ENCODE measurements at regions of chr12 and their contacts with region 1.

Region 1: GRCh38 chr12:75560167-75560566 is 48.8 kb upstream of the KRR1 start:
- DNase-seq: peak; percentile 63
- ATAC-seq: peak; percentile 87
- H3K4me3 ChIP-seq: no peak overlapping the region
- H3K27ac ChIP-seq: no peak overlapping the region
- H3K4me1 ChIP-seq: peaks cover 6% of the 10 kb centered on the region
- H3K27me3 ChIP-seq: no peaks in the 10 kb centered on the region
- CTCF ChIP-seq: peak; percentile 51
- POLR2A ChIP-seq: no peak
- RAD21 ChIP-seq: peak; percentile 67

Region 2: DNA sequence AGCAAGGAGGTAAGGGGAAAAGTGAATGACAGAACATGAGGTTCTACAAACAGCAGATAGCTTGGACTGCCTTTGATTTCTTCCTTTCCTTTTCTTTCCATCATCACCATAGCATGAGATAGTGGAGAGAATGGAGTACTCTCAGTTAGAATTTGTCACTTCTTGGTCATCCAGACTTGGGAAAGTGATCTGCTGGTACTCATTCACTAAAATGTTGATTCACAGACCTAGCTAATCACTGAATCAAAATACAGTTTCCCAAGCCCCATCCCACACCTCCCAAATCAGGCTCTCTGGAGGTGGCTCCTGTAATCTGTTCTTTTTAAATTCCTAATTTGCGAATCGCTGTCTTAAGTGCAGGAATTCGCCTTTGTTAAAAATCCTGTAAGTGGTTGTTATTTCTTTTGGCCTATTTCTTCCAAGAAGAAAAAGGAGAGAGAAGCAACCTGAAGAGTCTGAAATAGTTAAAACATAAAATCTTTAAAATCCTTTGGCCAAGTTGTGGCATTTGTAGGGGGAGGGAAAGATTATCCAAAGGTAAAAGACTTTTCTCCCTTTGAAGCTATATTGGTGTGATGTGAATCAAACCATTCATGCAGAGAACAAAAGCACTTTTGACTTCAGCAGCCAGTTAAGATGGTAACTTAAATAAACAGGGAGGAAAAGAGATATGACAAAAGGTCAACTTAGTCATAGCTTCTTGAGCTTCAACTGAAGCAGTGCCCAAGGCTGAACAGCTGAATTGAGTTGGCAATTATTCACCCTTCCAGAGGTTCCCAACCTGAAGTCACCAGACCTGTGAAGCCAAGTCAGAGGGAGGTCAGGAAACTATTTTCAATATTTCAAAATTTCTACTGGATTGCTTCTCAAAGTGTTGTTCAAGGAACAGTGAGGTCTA is 206.3 kb after region 1 on chr12:
- CTCF ChIA-PET with region 1: no interaction called
- POLR2A ChIA-PET with region 1: no interaction called
- dilution Hi-C with region 1: no loop called
- in situ Hi-C with region 1: no loop called
- intact Hi-C with region 1: loop called (anchors 5 kb)
- DNase-seq: peak; percentile 80
- ATAC-seq: peak; percentile 71
- H3K4me3 ChIP-seq: no peak overlapping the region
- H3K27ac ChIP-seq: no peak overlapping the region
- H3K4me1 ChIP-seq: peaks cover 2% of the 10 kb centered on the region; the same call in 1 of the 2 replicates
- H3K27me3 ChIP-seq: no peaks in the 10 kb centered on the region
- CTCF ChIP-seq: no peak
- POLR2A ChIP-seq: no peak
- RAD21 ChIP-seq: no peak

Measured in IMR-90 (cell line).